ENCODE measurements at regions of chr3 and their contacts with region 1.

Region 1: DNA sequence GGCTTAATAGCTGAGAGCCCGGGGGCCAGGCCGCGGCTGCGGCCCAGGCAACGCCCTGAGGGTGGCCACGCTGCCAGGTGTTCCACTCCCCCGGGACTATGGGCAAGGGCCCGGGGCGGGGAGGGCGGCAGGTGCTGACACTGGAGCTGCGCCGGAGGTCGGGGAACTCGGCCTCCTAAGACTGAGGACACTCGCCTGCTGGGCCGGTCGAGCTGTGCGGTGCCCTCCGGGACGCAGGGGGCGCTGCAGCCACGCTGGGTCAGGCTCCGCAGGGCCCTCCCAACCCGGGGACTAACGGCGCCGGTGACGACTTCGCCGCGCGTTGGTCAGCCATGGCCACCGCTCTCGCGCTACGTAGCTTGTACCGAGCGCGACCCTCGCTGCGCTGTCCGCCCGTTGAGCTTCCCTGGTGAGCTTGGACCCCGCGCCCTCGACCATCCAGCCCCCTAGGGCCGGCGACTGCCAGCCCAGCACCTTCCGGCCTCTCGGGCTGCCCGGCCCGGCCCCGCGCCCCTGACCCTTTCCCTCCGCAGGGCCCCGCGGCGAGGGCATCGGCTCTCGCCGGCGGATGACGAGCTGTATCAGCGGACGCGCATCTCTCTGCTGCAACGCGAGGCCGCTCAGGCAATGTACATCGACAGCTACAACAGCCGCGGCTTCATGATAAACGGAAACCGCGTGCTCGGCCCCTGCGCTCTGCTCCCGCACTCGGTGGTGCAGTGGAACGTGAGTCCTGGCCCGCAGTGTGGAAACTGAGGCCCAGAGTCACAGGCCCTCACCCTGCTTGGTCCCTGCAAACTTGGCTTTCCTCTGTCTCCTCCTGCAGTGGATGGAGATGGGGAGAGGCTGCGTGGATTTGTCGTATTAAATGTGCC is at the start of gene NDUFAF3:
- DNase-seq: peak; percentile 96
- ATAC-seq: peak; percentile 78
- H3K4me3 Mint-ChIP-seq: peak within 1 kb of the TSS; percentile 95
- H3K27ac Mint-ChIP-seq: peak within 1 kb of the TSS; percentile 96
- H3K4me1 Mint-ChIP-seq: peaks cover 60% of the 10 kb centered on the region
- H3K27me3 Mint-ChIP-seq: no peaks in the 10 kb centered on the region
- total RNA-seq, gene NDUFAF3: 90.8 to 108 TPM

Region 2: DNA sequence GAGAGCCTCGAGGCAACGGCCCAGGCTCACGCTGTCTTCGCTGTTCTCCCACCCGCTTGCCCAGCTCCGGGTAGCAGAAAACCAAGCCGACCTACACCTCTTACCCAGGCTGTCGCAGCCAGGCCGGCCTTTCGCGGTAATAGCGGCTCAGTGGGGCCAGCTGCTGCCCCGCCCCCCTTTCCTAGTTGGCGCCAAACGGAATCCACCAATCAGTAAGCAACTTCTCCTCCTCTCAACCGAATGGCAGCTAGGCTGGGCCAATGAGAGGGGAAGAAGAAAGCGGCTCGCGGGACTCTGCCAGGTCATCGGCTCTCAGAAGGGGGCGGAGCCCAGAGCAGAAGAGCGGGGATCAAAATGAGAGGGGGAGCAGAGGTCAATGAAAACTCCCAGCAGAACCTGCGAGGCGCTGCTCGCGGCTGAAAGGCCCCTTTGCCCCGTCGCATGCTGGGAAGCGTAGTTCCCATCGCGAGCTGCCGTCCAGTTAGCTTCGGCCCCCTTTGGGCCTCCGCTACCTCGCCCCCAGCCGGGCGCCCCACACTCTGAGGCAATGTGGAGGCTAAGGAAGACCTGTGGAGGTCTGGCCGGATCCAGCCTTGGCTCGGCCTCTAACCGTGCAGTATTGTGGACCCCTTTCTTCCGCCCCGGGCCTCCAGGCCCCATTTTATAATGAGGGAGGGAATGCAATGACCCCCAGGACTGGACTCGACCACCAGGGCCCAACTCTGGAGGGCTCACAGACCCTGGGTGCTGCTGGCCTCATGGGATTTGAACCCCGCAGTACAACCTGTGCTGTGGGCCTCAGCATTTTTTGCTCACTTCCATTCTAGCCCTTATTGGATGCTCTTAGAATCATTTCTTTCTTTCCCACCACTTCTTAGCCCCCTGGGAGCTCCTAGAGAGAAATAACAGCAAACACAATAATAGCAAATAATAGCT is 833.5 kb before region 1 on chr3 and contains the start of gene CDC25A:
- CTCF ChIA-PET with region 1: no interaction called
- POLR2A ChIA-PET with region 1: no interaction called
- intact Hi-C with region 1: loop called in 1 of 2 experiments (anchors 5 kb)
- DNase-seq: peak; percentile 98
- ATAC-seq: peak; percentile 99
- H3K4me3 Mint-ChIP-seq: peak within 1 kb of the TSS; percentile 96
- H3K27ac Mint-ChIP-seq: peak within 1 kb of the TSS; percentile 79
- H3K4me1 Mint-ChIP-seq: peaks cover 15% of the 10 kb centered on the region
- H3K27me3 Mint-ChIP-seq: peaks cover 7% of the 10 kb centered on the region
- total RNA-seq, gene CDC25A: 32.5 to 33.9 TPM

Region 3: DNA sequence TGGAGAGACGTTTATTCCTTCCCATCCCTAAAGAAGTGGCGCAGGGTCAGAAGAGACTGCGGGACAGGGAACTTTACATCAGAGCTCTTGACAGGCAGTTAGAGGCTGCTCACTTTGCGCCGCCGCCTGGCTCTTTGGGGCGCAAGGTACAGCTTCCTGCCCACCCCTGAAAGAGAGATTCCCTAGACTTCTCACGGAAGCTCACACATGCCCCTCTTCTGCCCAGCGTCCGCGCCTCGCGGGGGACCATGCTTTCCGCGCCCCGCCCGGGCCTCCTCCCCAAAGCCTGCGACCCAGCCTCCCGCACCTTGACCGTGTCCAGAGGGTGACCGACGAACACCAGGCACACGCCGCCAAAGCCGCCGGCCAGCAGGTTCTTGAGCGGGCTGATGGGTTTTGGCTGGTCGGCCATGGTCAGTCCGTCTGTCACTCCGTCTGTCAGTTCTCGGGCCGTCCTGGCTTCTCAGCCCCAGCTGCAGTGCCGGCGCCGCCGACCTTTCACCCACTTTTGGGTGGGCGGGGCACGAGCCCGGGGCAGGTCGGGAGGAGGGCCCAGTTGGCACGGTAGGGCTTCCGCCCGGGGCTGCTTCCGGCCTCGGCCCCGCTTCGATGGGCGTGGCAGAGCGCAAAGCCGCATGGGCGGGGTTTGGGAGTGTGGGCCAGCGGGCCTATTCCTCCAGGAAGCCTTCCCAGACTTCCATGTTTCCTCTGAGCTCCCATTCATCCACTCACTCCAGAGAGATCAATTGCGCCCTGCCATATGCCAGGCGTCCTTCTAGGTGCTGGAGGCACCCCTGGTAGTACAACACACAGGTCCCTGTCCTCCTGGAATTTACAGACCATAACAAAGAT is 123.4 kb before region 1 on chr3 and contains the start of gene SLC25A20:
- CTCF ChIA-PET with region 1: interaction called, 5 read pairs
- POLR2A ChIA-PET with region 1: no interaction called
- intact Hi-C with region 1: loop called in 1 of 2 experiments (anchors 1 kb)
- DNase-seq: peak; percentile 96
- ATAC-seq: peak; percentile 96
- H3K4me3 Mint-ChIP-seq: peak within 1 kb of the TSS; percentile 90
- H3K27ac Mint-ChIP-seq: peak within 1 kb of the TSS; percentile 92
- H3K4me1 Mint-ChIP-seq: peaks cover 30% of the 10 kb centered on the region
- H3K27me3 Mint-ChIP-seq: no peaks in the 10 kb centered on the region
- total RNA-seq, gene SLC25A20: 15.8 to 18.5 TPM

Region 4: DNA sequence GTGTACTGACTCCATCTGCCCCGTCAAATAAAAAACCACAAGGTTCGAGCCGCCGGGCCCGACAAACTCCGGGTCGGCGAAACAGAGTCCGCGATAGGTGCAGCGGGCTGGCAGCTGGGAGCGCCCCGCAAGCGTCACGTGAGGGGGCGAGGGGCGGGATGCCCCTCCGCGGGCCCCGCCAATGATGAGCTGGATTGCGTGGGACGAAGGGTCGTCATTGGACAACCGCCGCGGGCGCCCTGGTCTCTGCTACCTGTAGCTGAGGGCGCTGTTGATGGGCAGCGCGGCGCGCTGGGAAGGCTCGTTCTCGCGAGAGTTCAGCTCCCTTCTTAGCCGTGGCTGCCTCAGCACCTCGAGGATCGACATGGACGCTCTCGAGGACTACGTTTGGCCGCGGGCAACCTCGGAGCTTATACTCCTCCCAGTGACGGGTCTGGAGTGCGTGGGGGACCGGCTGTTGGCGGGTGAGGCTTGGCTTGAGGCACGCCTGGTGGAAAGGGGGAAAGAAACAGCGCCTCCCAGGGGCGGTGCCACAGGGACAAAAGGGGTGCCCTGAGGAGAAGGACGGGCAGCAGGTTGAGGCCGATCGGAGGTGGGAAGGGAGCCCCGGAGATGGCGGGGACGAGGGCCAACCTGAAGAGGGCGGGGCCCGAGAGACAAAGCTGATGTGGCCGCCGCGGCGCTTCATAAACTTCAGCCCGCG is 14.8 kb before region 1 on chr3 and contains the start of gene WDR6:
- CTCF ChIA-PET with region 1: interaction called, 31 read pairs
- POLR2A ChIA-PET with region 1: interaction called, 102 read pairs
- intact Hi-C with region 1: loop called (anchors 1 kb)
- DNase-seq: peak; percentile 99
- ATAC-seq: peak; percentile 90
- H3K4me3 Mint-ChIP-seq: peak within 1 kb of the TSS; percentile 100
- H3K27ac Mint-ChIP-seq: peak within 1 kb of the TSS; percentile 100
- H3K4me1 Mint-ChIP-seq: peaks cover 16% of the 10 kb centered on the region
- H3K27me3 Mint-ChIP-seq: no peaks in the 10 kb centered on the region
- total RNA-seq, gene WDR6: 109 to 127 TPM

Region 5: GRCh38 chr3:49165771-49166751 is 144.0 kb after region 1 on chr3 and contains the start of gene CCDC71:
- CTCF ChIA-PET with region 1: interaction called, 3 read pairs
- POLR2A ChIA-PET with region 1: no interaction called
- intact Hi-C with region 1: loop called in 1 of 2 experiments (anchors 2 kb)
- DNase-seq: peak; percentile 88
- ATAC-seq: peak; percentile 81
- H3K4me3 Mint-ChIP-seq: peak within 1 kb of the TSS; percentile 90
- H3K27ac Mint-ChIP-seq: peak within 1 kb of the TSS; percentile 89
- H3K4me1 Mint-ChIP-seq: peaks cover 39% of the 10 kb centered on the region
- H3K27me3 Mint-ChIP-seq: no peaks in the 10 kb centered on the region
- total RNA-seq, gene CCDC71: 19.5 to 22.2 TPM

Region 6: DNA sequence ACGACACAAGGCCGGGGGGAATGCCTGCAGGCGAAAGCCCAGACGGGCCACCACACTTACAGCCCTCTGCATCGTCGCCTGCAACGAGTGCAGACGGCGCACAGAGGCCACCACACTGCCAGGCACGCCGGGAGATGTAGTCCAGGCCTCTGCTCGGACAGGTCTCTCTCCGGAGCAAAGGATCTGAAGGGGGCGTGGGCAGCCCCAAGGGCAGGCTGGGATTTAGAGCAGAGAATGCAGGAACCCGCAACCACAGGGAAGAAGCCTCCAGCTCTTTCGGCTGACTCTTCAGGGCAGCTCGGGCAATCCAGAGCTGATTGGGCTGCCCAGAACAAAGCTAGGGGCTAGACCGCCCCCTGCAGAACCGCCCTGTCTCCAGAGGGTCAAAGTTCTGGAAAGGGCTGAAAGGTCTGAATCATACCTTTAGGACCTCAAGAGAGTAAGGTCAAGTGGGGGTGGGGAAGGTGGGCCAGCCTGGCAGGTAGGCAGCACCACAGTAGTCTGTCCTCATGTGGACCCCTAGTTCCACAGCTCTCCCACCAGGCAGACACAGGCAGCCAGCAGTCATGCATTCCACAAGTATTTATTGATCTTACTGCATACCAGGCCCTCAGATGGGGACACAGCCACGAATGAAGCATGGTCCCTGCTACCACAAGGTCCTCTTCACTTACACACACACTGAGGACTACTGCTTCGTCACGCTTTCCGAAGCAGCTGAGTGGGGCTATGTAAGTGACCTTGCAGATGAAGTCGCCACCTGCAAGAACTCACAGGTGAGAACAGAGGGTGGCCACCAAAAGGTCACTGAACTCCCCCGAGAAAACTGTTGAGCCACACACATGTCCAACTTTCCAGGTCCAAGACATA is 400.6 kb after region 1 on chr3 and contains the start of gene AMT:
- CTCF ChIA-PET with region 1: interaction called, 4 read pairs
- POLR2A ChIA-PET with region 1: no interaction called
- intact Hi-C with region 1: loop called in 1 of 2 experiments (anchors 10 kb)
- DNase-seq: no peak
- ATAC-seq: no peak
- H3K4me3 Mint-ChIP-seq: no peak within 1 kb of the TSS
- H3K27ac Mint-ChIP-seq: peak within 1 kb of the TSS; percentile 31
- H3K4me1 Mint-ChIP-seq: peaks cover 39% of the 10 kb centered on the region
- H3K27me3 Mint-ChIP-seq: no peaks in the 10 kb centered on the region
- total RNA-seq, gene AMT: 3.6 to 4.1 TPM

Measured in activated CD4-positive, alpha-beta T cell treated with anti-CD3 and anti-CD28 coated beads for 36 hours (primary cell).